ENCODE measurements at regions of chr5 and their contacts with region 1.

Region 1: GRCh38 chr5:127564002-127564769 is 46.7 kb downstream of the PRRC1 start:
- DNase-seq: no peak
- H3K4me3 ChIP-seq: no peak overlapping the region
- H3K27ac ChIP-seq: no peak overlapping the region
- H3K4me1 ChIP-seq: no peaks in the 10 kb centered on the region
- H3K27me3 ChIP-seq: peaks cover 2% of the 10 kb centered on the region
- CTCF ChIP-seq: peak; percentile 78

Region 2: DNA sequence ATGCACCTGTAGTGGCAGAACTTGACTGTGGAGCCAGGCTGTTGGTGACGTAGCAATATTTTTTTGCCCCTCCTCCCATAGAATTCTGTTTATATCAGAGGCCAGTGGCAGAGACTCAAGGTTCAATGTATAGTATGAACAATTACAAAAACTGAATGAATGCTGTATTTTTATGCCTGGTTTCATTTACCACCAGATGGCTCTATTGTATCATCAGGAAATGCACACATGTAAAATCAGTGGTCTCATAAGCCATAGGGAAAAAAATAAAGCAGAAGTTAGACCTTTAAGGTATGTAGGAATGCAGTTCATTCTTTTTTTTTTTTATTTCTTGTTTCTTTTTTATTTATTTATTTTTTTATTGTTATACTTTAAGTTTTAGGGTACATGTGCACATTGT is 182.6 kb after region 1 on chr5:
- intact Hi-C with region 1: loop called (anchors 10 kb)
- DNase-seq: no peak
- H3K4me3 ChIP-seq: no peak overlapping the region
- H3K27ac ChIP-seq: no peak overlapping the region
- H3K4me1 ChIP-seq: no peaks in the 10 kb centered on the region
- H3K27me3 ChIP-seq: no peaks in the 10 kb centered on the region
- CTCF ChIP-seq: peak; percentile 62

Region 3: GRCh38 chr5:127856292-127856691 is 292.1 kb after region 1 on chr5:
- intact Hi-C with region 1: no loop called
- DNase-seq: no peak
- H3K4me3 ChIP-seq: no peak overlapping the region
- H3K27ac ChIP-seq: no peak overlapping the region
- H3K4me1 ChIP-seq: peaks cover 19% of the 10 kb centered on the region
- H3K27me3 ChIP-seq: no peaks in the 10 kb centered on the region
- CTCF ChIP-seq: no peak

Region 4: DNA sequence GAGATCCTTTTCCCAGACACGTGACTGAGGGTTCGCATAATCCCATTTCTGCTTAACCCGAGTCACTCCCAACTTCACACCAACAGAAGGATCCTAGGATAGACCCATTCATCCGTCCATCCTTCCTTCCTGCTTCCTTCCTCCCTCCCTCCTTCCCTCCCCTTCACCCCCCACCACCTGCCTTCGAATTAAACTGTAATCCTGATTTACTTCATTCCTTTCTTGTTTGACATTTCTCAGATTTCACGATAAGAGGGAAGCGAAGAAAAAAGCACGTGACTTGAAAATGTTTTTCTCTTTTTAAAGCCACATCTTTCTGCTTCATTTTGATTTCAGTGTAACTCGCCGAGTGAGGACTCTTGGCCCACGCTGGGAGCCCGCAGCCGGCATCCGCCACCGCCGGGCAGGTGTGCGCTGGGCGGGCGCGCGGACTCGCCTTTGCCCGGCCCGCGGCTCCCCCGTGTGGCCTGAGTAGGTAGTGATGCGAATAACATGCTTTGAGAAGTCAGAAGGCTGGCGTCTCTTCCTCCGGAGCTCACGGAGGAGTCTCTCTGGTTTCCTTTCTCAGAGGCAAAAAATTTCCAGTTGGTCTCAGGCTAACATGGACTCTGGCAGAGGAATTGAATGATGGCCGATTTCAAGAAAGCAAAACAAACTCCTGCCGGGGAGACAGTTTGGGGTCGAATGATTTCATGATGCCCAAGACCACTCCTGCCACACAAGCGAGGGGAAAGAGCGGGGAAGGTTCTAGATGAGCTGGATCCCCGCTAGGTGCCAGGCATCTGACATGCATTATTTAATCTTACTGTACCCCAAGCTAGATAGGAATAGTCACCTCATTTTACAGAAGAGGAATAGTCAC is 637.1 kb after region 1 on chr5:
- intact Hi-C with region 1: loop called (anchors 5 kb)
- DNase-seq: peak; percentile 74
- H3K4me3 ChIP-seq: peak overlapping the region; percentile 42
- H3K27ac ChIP-seq: no peak overlapping the region
- H3K4me1 ChIP-seq: peaks cover 16% of the 10 kb centered on the region
- H3K27me3 ChIP-seq: no peaks in the 10 kb centered on the region
- CTCF ChIP-seq: peak; percentile 92

Measured in left ventricle myocardium inferior (tissue), 1 donor.